Activated CD4-positive, alpha-beta T cell treated with anti-CD3 and anti-CD28 coated beads for 36 hours (primary cell): ENCODE measurements at regions of chr13 and their contacts with region 1.

Region 1: DNA sequence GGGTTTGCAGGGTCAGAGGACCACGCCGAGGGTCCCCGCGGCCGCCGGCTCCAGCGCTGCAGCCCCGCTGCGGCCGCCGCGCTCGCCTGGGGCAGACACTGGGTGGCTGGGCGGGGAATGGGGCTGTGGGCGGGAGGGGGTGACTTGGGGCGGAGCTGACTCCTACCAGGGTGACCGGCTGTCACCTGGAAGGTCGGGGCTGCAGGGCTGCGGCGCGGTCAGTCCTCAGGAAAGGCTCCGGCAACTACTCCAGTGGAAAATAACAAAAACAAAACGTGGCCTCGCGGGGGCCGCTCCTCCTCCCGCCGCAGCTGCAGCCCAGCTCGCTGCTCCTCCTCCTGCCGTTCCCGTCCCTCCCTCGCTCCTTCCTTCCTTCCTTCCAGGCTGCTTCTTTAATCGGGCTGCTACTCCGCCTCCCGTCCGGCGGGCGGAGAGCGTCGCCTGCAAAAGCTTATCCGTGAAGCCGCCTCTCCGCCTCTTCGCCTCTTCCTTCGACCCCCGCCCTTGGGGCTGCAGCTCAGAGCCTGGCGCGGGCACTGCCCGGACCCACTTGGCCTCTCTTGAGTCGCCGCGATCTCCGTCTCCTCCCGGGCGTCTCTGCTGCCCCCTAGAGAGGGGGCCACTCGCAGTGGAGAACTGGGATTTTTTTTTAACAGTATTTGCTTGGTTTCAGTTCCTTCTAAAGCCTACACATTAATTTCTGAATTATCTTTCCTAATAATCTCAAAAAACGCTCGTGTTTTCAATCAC is at the start of gene TBC1D4:
- DNase-seq: peak; percentile 80
- ATAC-seq: peak; percentile 74
- H3K4me3 Mint-ChIP-seq: peak within 1 kb of the TSS; percentile 85
- H3K27ac Mint-ChIP-seq: peak within 1 kb of the TSS; percentile 33
- H3K4me1 Mint-ChIP-seq: peaks cover 20% of the 10 kb centered on the region
- H3K27me3 Mint-ChIP-seq: peaks cover 44% of the 10 kb centered on the region
- total RNA-seq, gene TBC1D4: 29.4 to 31.7 TPM

Region 2: DNA sequence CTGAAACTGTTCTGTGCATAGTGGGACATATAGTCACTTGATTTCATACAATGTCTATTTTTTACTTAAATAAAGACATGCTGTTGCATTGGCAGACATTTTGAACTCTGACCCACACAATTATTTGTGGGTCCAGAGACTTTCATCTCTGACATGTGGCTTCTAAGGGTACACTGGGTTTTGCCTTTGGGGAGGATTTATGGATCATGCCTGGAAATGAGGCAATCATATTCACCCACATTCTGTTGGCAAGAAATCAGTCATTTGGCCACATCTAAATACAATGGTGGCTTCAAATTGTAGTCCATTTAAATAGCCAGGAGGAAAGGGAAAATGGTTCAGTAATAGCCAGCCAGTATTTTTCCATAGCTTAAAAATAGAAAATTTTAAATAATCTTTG is 1109.7 kb before region 1 on chr13:
- CTCF ChIA-PET with region 1: no interaction called
- POLR2A ChIA-PET with region 1: no interaction called
- intact Hi-C with region 1: no loop called
- DNase-seq: no peak
- ATAC-seq: no peak
- H3K4me3 Mint-ChIP-seq: no peak overlapping the region
- H3K27ac Mint-ChIP-seq: no peak overlapping the region
- H3K4me1 Mint-ChIP-seq: peaks cover 3% of the 10 kb centered on the region
- H3K27me3 Mint-ChIP-seq: no peaks in the 10 kb centered on the region

Region 3: DNA sequence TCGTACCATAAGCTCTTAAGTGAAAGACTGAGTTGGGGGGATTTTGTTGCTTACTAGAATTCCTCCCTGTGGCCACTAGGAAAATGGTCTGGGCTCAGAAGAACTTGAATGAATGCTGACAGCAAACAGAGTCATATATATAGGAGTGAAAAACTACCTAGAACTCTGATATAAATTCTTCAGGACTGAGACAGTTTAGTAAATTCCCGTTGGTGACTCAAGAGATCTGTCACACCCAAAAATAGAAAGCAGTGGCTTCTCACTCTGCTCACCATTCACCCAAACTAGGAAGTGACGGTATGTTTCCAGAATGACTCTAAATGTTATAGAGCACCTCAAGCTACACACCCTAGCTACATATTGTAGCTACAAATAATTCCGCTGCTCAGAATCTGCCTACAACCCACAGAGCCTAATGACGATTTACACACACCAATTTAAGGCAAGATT is 116.5 kb before region 1 on chr13:
- CTCF ChIA-PET with region 1: interaction called, 3 read pairs
- POLR2A ChIA-PET with region 1: no interaction called
- intact Hi-C with region 1: loop called (anchors 2 to 5 kb)
- DNase-seq: peak; percentile 41
- ATAC-seq: peak; percentile 93
- H3K4me3 Mint-ChIP-seq: peak overlapping the region; percentile 24
- H3K27ac Mint-ChIP-seq: peak overlapping the region; percentile 79
- H3K4me1 Mint-ChIP-seq: peaks cover 44% of the 10 kb centered on the region
- H3K27me3 Mint-ChIP-seq: no peaks in the 10 kb centered on the region

Region 4: GRCh38 chr13:75384879-75385707 is 97.2 kb before region 1 on chr13:
- CTCF ChIA-PET with region 1: no interaction called
- POLR2A ChIA-PET with region 1: no interaction called
- intact Hi-C with region 1: loop called in 1 of 2 experiments (anchors 5 kb)
- DNase-seq: no peak
- ATAC-seq: no peak
- H3K4me3 Mint-ChIP-seq: no peak overlapping the region
- H3K27ac Mint-ChIP-seq: no peak overlapping the region
- H3K4me1 Mint-ChIP-seq: peaks cover 16% of the 10 kb centered on the region
- H3K27me3 Mint-ChIP-seq: peaks cover 3% of the 10 kb centered on the region

Region 5: GRCh38 chr13:75549262-75550158 is 67.3 kb after region 1 on chr13 and contains the start of gene UCHL3:
- CTCF ChIA-PET with region 1: interaction called, 5 read pairs
- POLR2A ChIA-PET with region 1: no interaction called
- intact Hi-C with region 1: loop called (anchors 1 to 2 kb)
- DNase-seq: peak; percentile 99
- ATAC-seq: peak; percentile 96
- H3K4me3 Mint-ChIP-seq: peak within 1 kb of the TSS; percentile 85
- H3K27ac Mint-ChIP-seq: peak within 1 kb of the TSS; percentile 95
- H3K4me1 Mint-ChIP-seq: peaks cover 41% of the 10 kb centered on the region
- H3K27me3 Mint-ChIP-seq: no peaks in the 10 kb centered on the region
- total RNA-seq, gene UCHL3: 42.2 to 45.3 TPM

Region 6: DNA sequence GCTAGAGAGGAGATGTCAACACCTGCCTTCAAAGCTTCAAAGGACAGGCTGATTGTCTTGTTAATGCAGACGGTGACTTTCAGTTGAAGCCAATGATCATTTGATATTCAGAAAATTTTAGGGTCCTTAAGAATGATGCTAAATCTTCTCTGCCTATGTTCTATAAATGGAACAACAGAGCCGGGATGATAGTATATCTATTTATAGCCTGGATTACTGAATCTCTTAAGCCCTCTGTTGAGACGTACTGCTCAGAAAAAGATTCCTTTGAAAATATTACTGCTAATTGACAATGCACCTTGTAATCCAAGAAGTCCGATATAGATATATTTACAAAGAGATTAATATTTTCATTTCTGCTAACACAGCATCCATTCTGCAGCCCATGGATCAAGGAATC is 118.1 kb after region 1 on chr13:
- CTCF ChIA-PET with region 1: no interaction called
- POLR2A ChIA-PET with region 1: no interaction called
- intact Hi-C with region 1: no loop called
- DNase-seq: no peak
- ATAC-seq: no peak
- H3K4me3 Mint-ChIP-seq: no peak overlapping the region
- H3K27ac Mint-ChIP-seq: no peak overlapping the region
- H3K4me1 Mint-ChIP-seq: no peaks in the 10 kb centered on the region
- H3K27me3 Mint-ChIP-seq: no peaks in the 10 kb centered on the region

Region 7: DNA sequence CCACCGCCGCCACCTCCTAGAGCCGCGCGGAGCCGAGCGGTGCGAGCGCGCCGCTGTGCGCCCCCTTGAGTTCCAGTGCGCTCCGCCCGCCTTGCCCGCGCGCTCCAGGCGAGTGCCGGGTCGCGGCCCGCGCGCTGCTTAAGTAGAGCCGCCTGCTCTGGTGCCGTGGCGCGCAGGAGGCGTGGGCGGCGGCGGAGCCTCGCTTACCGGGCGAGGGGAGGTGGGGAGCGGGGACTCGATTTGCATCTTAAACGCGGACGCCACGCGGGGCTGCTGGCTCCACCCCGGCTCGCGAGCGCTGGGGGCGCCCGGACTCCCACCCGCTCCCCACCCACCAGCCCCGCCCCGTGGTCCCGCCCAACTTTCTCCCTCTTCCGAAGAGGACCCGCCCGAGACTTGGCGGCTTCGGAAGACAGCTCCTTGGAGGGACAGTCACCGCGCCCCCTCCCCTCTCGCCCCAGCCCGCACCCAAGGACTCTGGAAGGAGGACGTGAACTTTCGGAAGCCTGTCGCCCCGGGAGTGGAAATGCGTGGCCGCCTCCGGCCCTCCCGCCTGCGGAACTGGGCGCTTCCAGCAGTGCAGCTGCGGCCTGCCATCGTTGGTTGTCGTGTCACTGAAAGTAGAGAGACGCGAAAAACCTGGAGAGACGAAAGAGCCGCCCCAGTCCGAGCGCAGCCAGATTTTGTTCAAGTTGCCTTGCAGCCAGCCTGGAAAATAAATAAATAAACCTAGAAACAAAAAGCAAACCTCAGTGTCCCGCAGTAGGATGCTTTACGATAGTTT is 1404.2 kb after region 1 on chr13 and contains the start of gene KCTD12:
- CTCF ChIA-PET with region 1: no interaction called
- POLR2A ChIA-PET with region 1: no interaction called
- intact Hi-C with region 1: loop called in 1 of 2 experiments (anchors 10 kb)
- DNase-seq: peak; percentile 86
- ATAC-seq: peak; percentile 78
- H3K4me3 Mint-ChIP-seq: peak within 1 kb of the TSS; percentile 93
- H3K27ac Mint-ChIP-seq: peak within 1 kb of the TSS; percentile 90
- H3K4me1 Mint-ChIP-seq: peaks cover 29% of the 10 kb centered on the region
- H3K27me3 Mint-ChIP-seq: peaks cover 8% of the 10 kb centered on the region
- total RNA-seq, gene KCTD12: 9.9 to 11.1 TPM